Right ventricle myocardium inferior (tissue), 1 donor: ENCODE measurements at regions of chr16 and their contacts with region 1.

Region 1: GRCh38 chr16:87127061-87127739 is 190.0 kb downstream of the C16orf95 start:
- DNase-seq: no peak
- ATAC-seq: peak; percentile 66

Region 2: DNA sequence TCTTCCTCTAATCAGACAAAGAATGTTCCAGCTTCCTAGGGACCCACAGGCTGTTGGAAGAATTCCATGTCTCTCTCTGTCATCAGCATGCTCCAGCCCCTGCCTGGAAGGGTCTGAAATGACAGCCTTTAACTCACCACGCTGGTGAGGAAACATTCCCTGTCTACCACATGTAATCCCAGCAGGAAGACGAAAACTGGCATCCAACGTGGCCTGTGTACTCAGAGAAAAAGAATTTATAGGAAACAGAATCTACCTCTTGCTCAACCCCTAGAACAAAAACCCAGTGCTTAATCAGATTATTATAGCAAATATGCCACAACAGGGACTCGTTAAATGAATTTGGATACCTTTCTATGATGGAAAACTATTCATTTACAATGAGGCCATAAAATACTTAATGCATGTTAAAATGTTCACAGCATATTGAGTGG is 764.1 kb before region 1 on chr16:
- intact Hi-C with region 1: no loop called
- DNase-seq: no peak
- ATAC-seq: no peak

Region 3: GRCh38 chr16:87203060-87203656 is 76.0 kb after region 1 on chr16:
- intact Hi-C with region 1: loop called (anchors 10 kb)
- DNase-seq: no peak
- ATAC-seq: peak; percentile 56